Activated CD8-positive, alpha-beta memory T cell treated with anti-CD3 and anti-CD28 coated beads, Interleukin-2, amount 10 ng/mL, durations not matched to agents 7 days and 5 days (primary cell): ENCODE measurements at regions of chr14 and their contacts with region 1.

Region 1: GRCh38 chr14:36553656-36554260 is 28.7 kb downstream of the NKX2-8 start:
- DNase-seq: no peak
- ATAC-seq: no peak
- H3K4me3 Mint-ChIP-seq: no peak overlapping the region
- H3K27ac Mint-ChIP-seq: no peak overlapping the region
- H3K4me1 Mint-ChIP-seq: no peaks in the 10 kb centered on the region
- H3K27me3 Mint-ChIP-seq: peaks cover 2% of the 10 kb centered on the region

Region 2: GRCh38 chr14:36518586-36519430 is 35.0 kb before region 1 on chr14:
- CTCF ChIA-PET with region 1: no interaction called
- DNase-seq: no peak
- ATAC-seq: no peak
- H3K4me3 Mint-ChIP-seq: no peak overlapping the region
- H3K27ac Mint-ChIP-seq: peak overlapping the region; percentile 66
- H3K4me1 Mint-ChIP-seq: peaks cover 6% of the 10 kb centered on the region
- H3K27me3 Mint-ChIP-seq: peaks cover 88% of the 10 kb centered on the region

Region 3: DNA sequence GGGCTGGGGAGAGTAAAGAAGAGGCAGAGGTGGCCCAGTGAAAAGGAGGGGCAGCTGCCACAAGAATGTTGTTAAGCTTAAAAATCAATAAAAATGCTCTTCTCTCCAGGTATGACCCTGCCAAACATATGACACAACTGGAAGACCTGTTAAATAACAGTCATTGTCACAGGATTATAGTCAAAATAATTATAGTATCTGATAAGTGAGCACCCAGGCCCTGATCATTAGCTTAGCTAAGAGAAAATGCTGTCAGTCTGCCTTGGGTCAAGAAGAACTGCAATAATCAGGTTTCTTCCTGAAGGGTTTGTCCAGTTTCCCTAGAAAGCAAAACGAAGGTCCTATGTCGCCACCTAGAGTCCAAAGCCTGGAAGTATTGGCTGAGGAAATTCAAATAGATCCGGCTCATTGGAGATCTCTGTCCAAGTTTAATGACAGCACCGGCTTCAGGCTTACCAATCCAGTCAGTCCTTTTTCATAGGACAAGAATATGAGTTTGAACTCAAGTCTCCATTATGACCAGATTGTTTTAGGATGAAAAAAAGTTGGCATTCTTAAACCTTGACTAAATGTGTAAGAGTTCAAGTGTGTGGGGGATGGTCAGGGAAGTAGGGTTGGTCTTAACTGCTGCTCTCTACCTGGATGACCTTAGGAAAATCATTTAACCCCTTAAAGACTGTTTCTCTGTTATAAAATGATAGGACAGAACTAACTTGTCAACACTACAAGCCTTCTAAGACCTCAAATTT is 51.2 kb after region 1 on chr14:
- CTCF ChIA-PET with region 1: interaction called, 18 read pairs
- DNase-seq: peak; percentile 50
- ATAC-seq: no peak
- H3K4me3 Mint-ChIP-seq: no peak overlapping the region
- H3K27ac Mint-ChIP-seq: no peak overlapping the region
- H3K4me1 Mint-ChIP-seq: no peaks in the 10 kb centered on the region
- H3K27me3 Mint-ChIP-seq: peaks cover 3% of the 10 kb centered on the region

Region 4: GRCh38 chr14:36941783-36942521 is 388.2 kb after region 1 on chr14:
- CTCF ChIA-PET with region 1: interaction called, 10 read pairs
- DNase-seq: peak; percentile 65
- ATAC-seq: peak; percentile 39
- H3K4me3 Mint-ChIP-seq: no peak overlapping the region
- H3K27ac Mint-ChIP-seq: no peak overlapping the region
- H3K4me1 Mint-ChIP-seq: no peaks in the 10 kb centered on the region
- H3K27me3 Mint-ChIP-seq: no peaks in the 10 kb centered on the region